Naive thymus-derived CD4-positive, alpha-beta T cell (primary cell): ENCODE measurements at regions of chr3 and their contacts with region 1.

Region 1: DNA sequence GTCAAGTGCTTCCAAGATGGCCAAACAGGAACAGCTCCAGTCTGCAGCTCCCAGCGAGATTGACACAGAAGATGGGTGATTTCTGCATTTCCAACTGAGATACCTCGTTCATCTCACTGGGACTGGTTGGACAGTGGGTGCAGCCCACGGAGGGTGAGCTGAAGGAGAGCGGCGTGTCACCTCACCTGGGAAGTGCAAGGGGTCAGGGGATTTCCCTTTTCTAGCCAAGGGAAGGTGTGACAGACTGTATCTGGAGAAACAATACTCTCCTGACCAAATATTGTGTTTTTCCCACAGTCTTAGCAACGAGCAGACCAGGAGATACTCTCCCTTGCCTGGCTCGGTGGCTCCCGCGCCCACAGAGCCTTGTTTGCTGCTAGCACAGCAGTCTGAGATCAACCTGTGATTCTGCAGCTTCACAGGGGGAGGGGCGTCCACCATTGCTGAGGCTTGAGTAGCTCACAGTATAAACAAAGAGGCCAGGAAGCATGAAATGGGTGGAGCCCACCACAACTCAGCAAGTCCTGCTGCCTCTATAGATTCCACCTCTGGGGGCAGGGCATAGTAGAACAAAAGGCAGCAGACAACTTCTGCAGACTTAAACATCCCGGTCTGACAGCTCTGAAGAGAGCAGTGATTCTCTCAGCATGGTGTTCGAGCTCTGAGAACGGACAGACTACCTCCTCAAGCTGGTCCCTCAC is 293.5 kb upstream of the SUCLG2 start:
- DNase-seq: peak in 8 of 9 donors; percentile 25 to 92 (median 84)
- ATAC-seq: peak; percentile 97
- H3K4me3 ChIP-seq: peak overlapping the region; percentile 40
- H3K4me3 Mint-ChIP-seq: peak overlapping the region; percentile 76 to 92 (median 83)
- H3K27ac ChIP-seq: peak overlapping the region; percentile 38
- H3K27ac Mint-ChIP-seq: peak overlapping the region; percentile 76 to 97 (median 91)
- H3K4me1 ChIP-seq: peaks cover 6 to 26% of the 10 kb centered on the region in 2 donors
- H3K4me1 Mint-ChIP-seq: peaks cover 11 to 54% (median 39%) of the 10 kb centered on the region in 7 donors
- H3K27me3 ChIP-seq: no peaks in the 10 kb centered on the region
- H3K27me3 Mint-ChIP-seq: no peaks in the 10 kb centered on the region

Region 2: DNA sequence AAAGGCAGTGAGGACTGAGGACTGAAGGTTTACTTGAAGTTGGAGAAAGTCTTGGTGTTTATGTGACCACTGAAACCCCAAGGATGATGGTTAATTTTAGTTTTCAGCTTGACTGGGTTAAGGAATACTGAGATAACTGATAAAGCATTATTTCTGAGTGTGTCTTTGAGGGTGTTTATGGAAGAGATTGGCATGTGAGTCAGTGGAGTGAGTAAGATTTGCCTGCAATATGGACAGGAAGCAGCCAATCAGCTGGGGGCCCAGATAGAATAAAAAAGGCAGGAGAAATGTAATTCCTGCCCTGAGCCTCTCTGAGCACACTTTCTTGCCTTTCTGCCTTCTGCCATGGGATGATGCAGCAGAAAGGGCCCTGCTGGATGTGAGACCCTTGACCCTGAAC is 857.5 kb before region 1 on chr3:
- CTCF ChIA-PET with region 1: no interaction called
- POLR2A ChIA-PET with region 1: no interaction called
- intact Hi-C with region 1: no loop called
- DNase-seq: no peak
- ATAC-seq: no peak
- H3K4me3 ChIP-seq: no peak overlapping the region
- H3K4me3 Mint-ChIP-seq: no peak overlapping the region
- H3K27ac ChIP-seq: no peak overlapping the region
- H3K27ac Mint-ChIP-seq: no peak overlapping the region
- H3K4me1 ChIP-seq: no peaks in the 10 kb centered on the region
- H3K4me1 Mint-ChIP-seq: peaks cover 0 to 4% (median 0%) of the 10 kb centered on the region in 7 donors
- H3K27me3 ChIP-seq: no peaks in the 10 kb centered on the region
- H3K27me3 Mint-ChIP-seq: peaks cover 0 to 8% (median 4%) of the 10 kb centered on the region in 5 donors

Region 3: DNA sequence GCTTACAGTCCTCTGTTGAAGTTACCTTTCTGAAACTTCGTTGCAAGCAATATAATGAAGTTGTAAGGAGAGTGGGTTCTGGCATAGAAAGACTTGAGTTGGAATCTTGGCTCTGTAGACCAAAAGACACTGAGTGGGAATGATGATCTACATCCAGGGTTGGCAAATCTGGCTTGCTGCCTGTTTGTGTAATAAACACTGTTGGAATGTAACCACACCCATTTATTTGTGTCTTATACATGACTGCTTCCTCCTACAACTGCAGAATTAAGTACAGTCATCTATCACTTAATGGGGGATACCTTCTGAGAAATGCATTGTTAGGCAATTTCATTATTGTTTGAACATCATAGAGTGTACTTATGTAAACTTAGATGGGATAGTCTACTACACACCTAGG is 115.1 kb before region 1 on chr3:
- CTCF ChIA-PET with region 1: no interaction called
- POLR2A ChIA-PET with region 1: no interaction called
- intact Hi-C with region 1: no loop called
- DNase-seq: no peak
- ATAC-seq: no peak
- H3K4me3 ChIP-seq: no peak overlapping the region
- H3K4me3 Mint-ChIP-seq: no peak overlapping the region
- H3K27ac ChIP-seq: no peak overlapping the region
- H3K27ac Mint-ChIP-seq: no peak overlapping the region
- H3K4me1 ChIP-seq: no peaks in the 10 kb centered on the region
- H3K4me1 Mint-ChIP-seq: no peaks in the 10 kb centered on the region
- H3K27me3 ChIP-seq: no peaks in the 10 kb centered on the region
- H3K27me3 Mint-ChIP-seq: peaks cover 0 to 18% (median 0%) of the 10 kb centered on the region in 5 donors

Region 4: DNA sequence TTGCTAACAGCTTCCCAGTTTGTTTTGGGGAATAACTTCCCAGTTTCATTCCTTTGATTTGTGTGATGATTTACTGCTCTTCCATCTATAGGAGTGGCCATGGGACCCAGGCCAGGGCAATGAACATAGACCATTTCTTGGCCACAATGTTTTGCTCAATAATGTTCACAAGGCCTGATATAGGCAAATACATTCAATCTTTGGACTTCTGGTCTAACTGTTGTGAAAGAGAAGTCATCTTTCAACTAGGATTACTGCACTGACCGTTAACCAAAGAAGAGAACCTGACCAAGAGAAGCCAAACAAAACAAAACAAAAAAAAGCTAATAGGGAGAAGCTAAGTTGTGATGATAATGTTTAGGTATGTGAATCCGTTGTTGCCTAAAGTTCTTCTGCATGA is 71.7 kb before region 1 on chr3:
- CTCF ChIA-PET with region 1: no interaction called
- POLR2A ChIA-PET with region 1: no interaction called
- intact Hi-C with region 1: no loop called
- DNase-seq: no peak
- ATAC-seq: no peak
- H3K4me3 ChIP-seq: no peak overlapping the region
- H3K4me3 Mint-ChIP-seq: no peak overlapping the region
- H3K27ac ChIP-seq: no peak overlapping the region
- H3K27ac Mint-ChIP-seq: no peak overlapping the region
- H3K4me1 ChIP-seq: no peaks in the 10 kb centered on the region
- H3K4me1 Mint-ChIP-seq: no peaks in the 10 kb centered on the region
- H3K27me3 ChIP-seq: no peaks in the 10 kb centered on the region
- H3K27me3 Mint-ChIP-seq: peaks cover 0 to 5% (median 0%) of the 10 kb centered on the region in 5 donors

Region 5: DNA sequence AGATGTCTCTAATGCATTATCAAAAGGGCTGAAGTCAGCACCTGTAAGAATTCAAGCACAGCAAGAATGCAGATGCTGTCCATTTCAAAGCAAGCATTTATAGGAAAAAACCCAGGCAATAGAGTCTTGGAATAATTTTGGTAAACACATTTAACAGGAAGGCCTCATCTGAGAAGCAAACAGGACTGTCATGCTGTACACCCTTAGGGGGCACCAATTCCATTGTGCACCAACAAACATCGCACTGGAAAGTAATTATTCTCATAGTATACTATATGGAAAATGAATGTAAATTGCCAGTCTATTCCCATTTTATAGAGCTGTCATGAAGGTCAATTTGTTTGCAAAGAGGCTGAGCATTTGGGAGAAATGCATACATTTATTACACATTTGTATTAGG is 46.3 kb before region 1 on chr3:
- CTCF ChIA-PET with region 1: interaction called, 5 read pairs
- POLR2A ChIA-PET with region 1: no interaction called
- intact Hi-C with region 1: loop called in 1 of 2 experiments (anchors 2 kb)
- DNase-seq: peak in 5 of 9 donors; percentile 17 to 31 (median 24)
- ATAC-seq: peak; percentile 31
- H3K4me3 ChIP-seq: no peak overlapping the region
- H3K4me3 Mint-ChIP-seq: no peak overlapping the region
- H3K27ac ChIP-seq: no peak overlapping the region
- H3K27ac Mint-ChIP-seq: no peak overlapping the region
- H3K4me1 ChIP-seq: peaks cover 0 to under 1% of the 10 kb centered on the region in 2 donors
- H3K4me1 Mint-ChIP-seq: peaks cover 0 to 19% (median 13%) of the 10 kb centered on the region in 7 donors
- H3K27me3 ChIP-seq: no peaks in the 10 kb centered on the region
- H3K27me3 Mint-ChIP-seq: no peaks in the 10 kb centered on the region

Region 6: GRCh38 chr3:68007621-68008226 is 59.8 kb after region 1 on chr3:
- CTCF ChIA-PET with region 1: interaction called, 6 read pairs
- POLR2A ChIA-PET with region 1: interaction called, 4 read pairs
- intact Hi-C with region 1: loop called in 1 of 2 experiments (anchors 2 kb)
- DNase-seq: peak; percentile 21 to 59 (median 45)
- ATAC-seq: peak; percentile 81
- H3K4me3 ChIP-seq: peak overlapping the region; percentile 62
- H3K4me3 Mint-ChIP-seq: peak overlapping the region; percentile 70 to 98 (median 88)
- H3K27ac ChIP-seq: no peak overlapping the region
- H3K27ac Mint-ChIP-seq: peak overlapping the region in 7 of 9 donors; percentile 45 to 87 (median 73)
- H3K4me1 ChIP-seq: peaks cover 0 to 10% of the 10 kb centered on the region in 2 donors
- H3K4me1 Mint-ChIP-seq: peaks cover 5 to 37% (median 27%) of the 10 kb centered on the region in 7 donors
- H3K27me3 ChIP-seq: no peaks in the 10 kb centered on the region
- H3K27me3 Mint-ChIP-seq: peaks cover 0 to 55% (median 17%) of the 10 kb centered on the region in 5 donors

Region 7: DNA sequence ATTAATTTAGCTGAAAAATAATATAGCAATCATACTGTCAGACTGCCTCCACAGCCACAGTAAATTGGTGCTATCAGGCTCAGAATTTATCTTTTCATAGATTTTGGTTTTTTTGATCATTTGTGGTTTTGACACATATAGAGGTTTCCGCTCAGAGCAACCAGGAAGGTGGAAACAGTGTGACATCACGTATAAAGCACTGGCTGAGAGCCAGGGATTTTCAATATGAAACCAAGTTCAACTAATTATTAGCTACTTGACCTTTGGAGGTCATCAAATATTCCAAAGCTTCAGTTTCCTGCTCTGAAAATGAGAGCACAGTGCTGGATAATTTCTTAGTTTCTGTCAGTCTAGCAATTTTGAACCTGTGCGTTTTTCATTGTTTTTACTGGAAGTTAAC is 140.3 kb after region 1 on chr3:
- CTCF ChIA-PET with region 1: no interaction called
- POLR2A ChIA-PET with region 1: interaction called, 3 read pairs
- intact Hi-C with region 1: loop called (anchors 1 to 10 kb)
- DNase-seq: peak in 7 of 9 donors; percentile 61 to 81 (median 74)
- ATAC-seq: peak; percentile 86
- H3K4me3 ChIP-seq: peak overlapping the region; percentile 23
- H3K4me3 Mint-ChIP-seq: peak overlapping the region; percentile 8 to 75 (median 39)
- H3K27ac ChIP-seq: no peak overlapping the region
- H3K27ac Mint-ChIP-seq: peak overlapping the region in 8 of 9 donors; percentile 1 to 85 (median 48)
- H3K4me1 ChIP-seq: peaks cover 27 to 37% of the 10 kb centered on the region in 2 donors
- H3K4me1 Mint-ChIP-seq: peaks cover 25 to 85% (median 71%) of the 10 kb centered on the region in 7 donors
- H3K27me3 ChIP-seq: no peaks in the 10 kb centered on the region
- H3K27me3 Mint-ChIP-seq: peaks cover 0 to 4% (median 0%) of the 10 kb centered on the region in 5 donors

Region 8: DNA sequence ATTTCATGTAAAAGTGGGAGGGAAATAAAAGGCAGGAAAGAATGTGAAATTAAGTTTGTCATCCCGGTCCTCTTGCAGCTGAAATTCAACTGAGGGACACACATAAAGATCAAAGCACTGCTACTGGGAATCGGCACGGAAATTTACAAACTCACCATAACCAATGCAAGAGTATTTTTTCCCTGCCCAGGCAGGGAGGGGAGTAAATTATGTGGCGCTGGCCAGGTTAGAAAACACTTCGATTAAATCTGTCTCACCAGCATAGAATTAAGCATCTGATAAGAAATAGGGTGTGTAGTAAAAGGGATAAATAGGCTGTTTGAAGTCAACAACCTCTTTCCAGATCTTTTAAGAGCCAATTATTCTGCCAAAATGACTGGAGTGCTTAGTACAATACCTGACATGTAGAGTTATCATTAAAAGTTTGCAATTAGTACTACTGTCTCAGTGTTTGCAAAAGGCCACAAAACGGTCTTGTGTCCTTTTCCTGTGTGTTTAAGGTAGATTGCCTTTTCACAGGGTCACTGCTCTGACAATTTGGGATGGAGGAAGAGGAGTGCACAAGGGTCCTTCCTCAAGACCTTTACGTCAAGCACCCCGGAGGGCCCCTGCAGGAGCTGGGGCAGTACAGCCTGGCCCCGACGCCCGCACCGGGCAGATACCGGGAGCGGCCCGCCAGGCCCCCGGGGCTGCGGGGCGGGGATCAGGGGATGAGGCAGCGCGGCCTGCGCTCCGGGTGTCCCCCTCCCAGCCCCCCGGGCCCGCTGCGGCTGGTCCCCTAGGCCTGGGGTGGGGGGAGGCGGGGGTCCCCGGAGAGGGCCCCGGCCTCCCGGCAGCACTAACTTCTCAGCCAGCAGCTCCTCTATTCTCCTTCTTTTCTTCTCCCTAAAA is 1131.6 kb after region 1 on chr3:
- CTCF ChIA-PET with region 1: no interaction called
- POLR2A ChIA-PET with region 1: no interaction called
- intact Hi-C with region 1: no loop called
- DNase-seq: peak in 2 of 9 donors; percentile 19 to 53
- ATAC-seq: no peak
- H3K4me3 ChIP-seq: peak overlapping the region; percentile 65
- H3K4me3 Mint-ChIP-seq: peak overlapping the region; percentile 81 to 93 (median 91)
- H3K27ac ChIP-seq: peak overlapping the region; percentile 76
- H3K27ac Mint-ChIP-seq: peak overlapping the region; percentile 81 to 99 (median 88)
- H3K4me1 ChIP-seq: peaks cover 59 to 64% of the 10 kb centered on the region in 2 donors
- H3K4me1 Mint-ChIP-seq: peaks cover 54 to 74% (median 69%) of the 10 kb centered on the region in 7 donors
- H3K27me3 ChIP-seq: no peaks in the 10 kb centered on the region
- H3K27me3 Mint-ChIP-seq: no peaks in the 10 kb centered on the region